Colonic mucosa (tissue), 4 donors: ENCODE measurements at regions of chr2 and their contacts with region 1.

Region 1: GRCh38 chr2:96856776-96857673 is 791 bp downstream of the ANKRD39 start:
- DNase-seq: peak; percentile 58
- H3K4me3 ChIP-seq: peak overlapping the region; percentile 85
- H3K27ac ChIP-seq: peak overlapping the region; percentile 83
- H3K4me1 ChIP-seq: no peaks in the 10 kb centered on the region
- H3K27me3 ChIP-seq: no peaks in the 10 kb centered on the region
- CTCF ChIP-seq: no peak

Region 2: DNA sequence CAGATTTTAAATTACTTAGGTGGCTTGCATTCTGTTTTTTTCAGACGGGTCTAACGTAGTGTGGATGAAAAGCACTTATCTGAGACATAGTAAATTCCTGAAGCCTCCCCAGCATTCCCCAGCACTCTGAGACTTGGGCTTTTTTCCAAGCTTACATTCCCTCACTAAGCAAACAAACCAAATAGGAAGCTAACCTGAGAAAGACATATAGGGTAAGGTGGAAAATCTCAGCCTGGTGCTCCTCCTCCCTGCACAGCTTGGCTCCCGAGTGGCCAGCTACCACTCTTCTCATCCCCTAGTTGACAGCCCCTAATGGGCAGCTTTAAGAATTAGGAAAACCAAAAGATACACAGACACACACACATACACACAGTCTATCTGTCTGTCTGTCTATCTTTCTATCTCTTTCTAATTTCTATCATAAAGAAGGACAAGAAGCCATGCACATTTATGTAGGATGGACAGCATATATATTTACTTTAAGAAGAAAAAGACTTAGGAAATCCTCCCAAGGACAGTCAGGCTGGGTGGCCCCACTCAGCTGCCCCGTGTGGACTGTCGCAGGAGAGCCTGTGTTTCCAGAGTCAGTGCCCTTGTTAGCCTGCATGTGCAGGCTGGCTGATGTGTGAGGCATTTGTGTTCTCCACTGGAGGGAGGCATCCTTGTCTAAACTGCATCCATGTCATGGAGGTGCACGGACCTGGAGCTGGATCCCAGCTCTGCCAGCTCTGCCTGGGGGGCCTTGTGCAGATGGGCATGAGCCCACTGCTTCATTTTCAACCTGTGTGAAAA is 32.8 kb before region 1 on chr2:
- intact Hi-C with region 1: loop called (anchors 5 kb)
- DNase-seq: no peak
- H3K4me3 ChIP-seq: no peak overlapping the region
- H3K27ac ChIP-seq: no peak overlapping the region
- H3K4me1 ChIP-seq: peaks cover 14% of the 10 kb centered on the region
- H3K27me3 ChIP-seq: no peaks in the 10 kb centered on the region
- CTCF ChIP-seq: no peak

Region 3: DNA sequence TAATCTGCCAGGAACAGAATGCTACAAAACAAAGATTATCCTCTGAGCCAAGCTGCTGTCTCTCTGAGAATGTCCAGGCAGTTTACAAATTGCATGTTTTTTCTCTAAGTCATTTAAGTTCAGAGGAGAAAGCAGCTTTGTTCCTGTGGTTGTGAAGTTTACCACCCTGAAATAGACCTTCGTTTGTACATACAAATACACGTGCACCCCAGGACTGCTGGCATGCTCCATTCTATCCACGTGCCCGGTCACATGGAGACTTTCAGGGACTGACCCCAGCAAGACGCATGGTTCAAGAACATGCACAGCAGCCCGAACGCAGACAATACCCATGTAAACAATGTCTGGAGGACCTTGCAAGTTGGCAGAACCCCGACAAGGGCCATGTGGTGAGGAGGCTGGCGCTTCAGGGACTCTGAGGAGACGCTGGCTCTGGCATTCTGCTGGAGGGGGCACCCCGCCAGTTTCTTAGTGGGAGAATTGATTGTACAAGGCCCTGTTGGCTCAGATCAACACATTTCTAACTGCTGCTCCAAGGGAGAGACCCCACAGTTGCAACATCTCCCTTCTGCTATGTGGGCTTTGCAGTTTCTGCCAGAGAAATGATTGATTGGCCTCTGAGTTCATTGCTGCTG is 96.1 kb after region 1 on chr2:
- intact Hi-C with region 1: loop called (anchors 2 kb)
- DNase-seq: peak; percentile 53
- H3K4me3 ChIP-seq: no peak overlapping the region
- H3K27ac ChIP-seq: no peak overlapping the region
- H3K4me1 ChIP-seq: peaks cover 16% of the 10 kb centered on the region
- H3K27me3 ChIP-seq: no peaks in the 10 kb centered on the region
- CTCF ChIP-seq: no peak